ENCODE measurements at regions of chr5 and their contacts with region 1.

Region 1: DNA sequence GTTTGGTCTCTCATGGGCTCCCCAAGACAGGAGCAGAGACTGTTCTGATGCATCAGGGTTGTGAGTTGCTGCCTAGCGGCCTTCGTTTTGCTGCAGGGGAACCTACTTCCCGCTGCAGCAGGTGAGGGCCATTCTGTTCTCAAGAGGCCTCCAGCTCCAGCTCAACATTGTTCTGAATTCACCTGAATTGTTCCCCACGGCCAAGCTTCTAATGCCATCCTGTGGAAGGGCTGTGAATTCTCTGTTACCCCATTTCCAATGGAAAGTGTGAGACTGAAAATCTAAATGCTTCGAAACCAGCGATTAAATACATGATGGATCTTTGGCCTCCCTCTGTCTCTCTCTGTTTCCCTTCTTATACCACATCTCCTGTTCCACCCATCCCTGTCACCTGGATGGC is 349.1 kb upstream of the DAP start:
- DNase-seq: no peak
- ATAC-seq: no peak
- H3K4me3 ChIP-seq: no peak overlapping the region
- H3K27ac ChIP-seq: no peak overlapping the region
- H3K4me1 ChIP-seq: no peaks in the 10 kb centered on the region
- H3K27me3 ChIP-seq: peaks cover 31% of the 10 kb centered on the region
- CTCF ChIP-seq: no peak
- POLR2A ChIP-seq: no peak
- RAD21 ChIP-seq: 0 out of 2 replicates have a peak, but pooled peaks have one; percentile 13

Region 2: DNA sequence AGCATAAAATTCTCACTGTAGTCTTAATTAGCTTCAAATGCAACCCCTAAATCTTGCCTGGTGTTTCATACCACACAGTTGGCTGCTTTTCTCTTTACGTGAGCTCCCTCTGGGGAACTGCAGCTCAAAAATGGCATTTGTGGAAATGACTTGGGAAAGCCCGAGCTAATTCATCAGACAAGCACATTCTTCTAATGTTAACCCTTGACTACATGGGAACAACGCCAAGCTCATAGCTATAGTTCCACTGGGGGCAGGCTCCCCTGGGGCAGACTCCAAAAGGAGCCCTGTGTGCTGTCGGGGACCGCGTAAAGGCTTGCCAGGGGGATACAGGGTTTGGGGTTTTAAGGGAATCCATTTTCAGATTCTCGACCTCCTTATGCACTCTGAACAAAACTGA is 47.7 kb before region 1 on chr5:
- CTCF ChIA-PET with region 1: no interaction called
- POLR2A ChIA-PET with region 1: no interaction called
- RAD21 ChIA-PET with region 1: no interaction called
- intact Hi-C with region 1: no loop called
- DNase-seq: no peak
- ATAC-seq: no peak
- H3K4me3 ChIP-seq: no peak overlapping the region
- H3K27ac ChIP-seq: no peak overlapping the region
- H3K4me1 ChIP-seq: no peaks in the 10 kb centered on the region
- H3K27me3 ChIP-seq: peaks cover 22% of the 10 kb centered on the region
- CTCF ChIP-seq: no peak; a peak in 1 of 6 replicates
- POLR2A ChIP-seq: no peak
- RAD21 ChIP-seq: no peak

Region 3: DNA sequence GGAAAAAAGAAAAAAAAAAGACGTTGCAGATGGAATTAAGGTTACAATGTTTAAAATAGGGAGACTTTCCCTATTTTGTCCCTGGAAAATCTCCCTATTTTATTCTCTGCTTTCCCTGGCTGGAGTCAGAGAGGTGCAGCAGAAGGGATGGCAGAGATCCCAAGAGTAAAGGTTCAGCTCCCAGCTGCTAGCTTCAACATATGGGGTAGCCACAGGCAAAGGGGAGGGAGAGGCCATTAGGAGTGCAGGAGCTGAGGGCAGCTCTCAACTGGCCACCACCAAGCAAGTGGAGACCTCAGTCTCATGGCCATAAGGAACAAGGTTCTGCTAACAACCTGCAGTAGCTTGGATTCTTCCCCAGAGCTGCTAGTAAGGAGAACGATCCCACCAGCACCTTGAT is 17.9 kb after region 1 on chr5:
- CTCF ChIA-PET with region 1: no interaction called
- POLR2A ChIA-PET with region 1: no interaction called
- RAD21 ChIA-PET with region 1: no interaction called
- intact Hi-C with region 1: loop called (anchors 1 kb)
- DNase-seq: no peak
- ATAC-seq: no peak
- H3K4me3 ChIP-seq: no peak overlapping the region
- H3K27ac ChIP-seq: no peak overlapping the region
- H3K4me1 ChIP-seq: no peaks in the 10 kb centered on the region
- H3K27me3 ChIP-seq: peaks cover 14% of the 10 kb centered on the region
- CTCF ChIP-seq: no peak
- POLR2A ChIP-seq: no peak
- RAD21 ChIP-seq: no peak

Measured in HCT116 (cell line).